H1 (cell line): ENCODE measurements at regions of chr2 and their contacts with region 1.

Region 1: DNA sequence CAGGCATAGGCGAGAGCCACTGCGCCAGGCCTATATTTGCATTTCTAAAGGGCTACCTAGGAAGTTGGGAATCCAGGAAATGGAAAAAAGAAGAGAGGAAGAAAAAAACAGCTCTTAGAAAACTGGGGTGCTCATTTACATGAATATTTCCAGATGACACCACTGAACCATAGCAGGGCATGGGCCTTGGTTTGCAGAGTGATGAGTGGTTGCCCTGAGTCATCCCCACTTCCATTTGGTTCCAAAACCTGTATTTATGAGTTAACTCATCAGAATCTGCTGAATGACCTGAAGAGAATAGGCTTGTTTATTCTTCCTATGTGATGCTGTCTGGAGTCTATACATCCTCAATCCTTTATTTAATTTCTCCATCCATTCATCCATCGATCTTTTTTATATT is 36.2 kb downstream of the EHD3 start:
- DNase-seq: no peak
- H3K4me3 ChIP-seq: no peak overlapping the region
- H3K27ac ChIP-seq: no peak overlapping the region
- H3K4me1 ChIP-seq: peaks cover 2 to 15% (median 8%) of the 10 kb centered on the region in 4 experiments; a peak in 4 of 7 replicates
- H3K27me3 ChIP-seq: no peaks in the 10 kb centered on the region
- CTCF ChIP-seq: no peak
- EP300 ChIP-seq: no peak
- POLR2A ChIP-seq: no peak
- RAD21 ChIP-seq: no peak

Region 2: GRCh38 chr2:31255911-31256571 is 14.1 kb before region 1 on chr2:
- CTCF ChIA-PET with region 1: interaction called, 15 read pairs
- POLR2A ChIA-PET with region 1: interaction called, 4 read pairs
- DNase-seq: no peak
- H3K4me3 ChIP-seq: no peak overlapping the region
- H3K27ac ChIP-seq: no peak overlapping the region
- H3K4me1 ChIP-seq: peaks cover 0 to 8% (median 2%) of the 10 kb centered on the region in 4 experiments; a peak in 3 of 7 replicates
- H3K27me3 ChIP-seq: no peaks in the 10 kb centered on the region
- CTCF ChIP-seq: no peak
- EP300 ChIP-seq: no peak
- POLR2A ChIP-seq: no peak
- RAD21 ChIP-seq: no peak